H1 (cell line): ENCODE measurements at regions of chr4 and their contacts with region 1.

Region 1: DNA sequence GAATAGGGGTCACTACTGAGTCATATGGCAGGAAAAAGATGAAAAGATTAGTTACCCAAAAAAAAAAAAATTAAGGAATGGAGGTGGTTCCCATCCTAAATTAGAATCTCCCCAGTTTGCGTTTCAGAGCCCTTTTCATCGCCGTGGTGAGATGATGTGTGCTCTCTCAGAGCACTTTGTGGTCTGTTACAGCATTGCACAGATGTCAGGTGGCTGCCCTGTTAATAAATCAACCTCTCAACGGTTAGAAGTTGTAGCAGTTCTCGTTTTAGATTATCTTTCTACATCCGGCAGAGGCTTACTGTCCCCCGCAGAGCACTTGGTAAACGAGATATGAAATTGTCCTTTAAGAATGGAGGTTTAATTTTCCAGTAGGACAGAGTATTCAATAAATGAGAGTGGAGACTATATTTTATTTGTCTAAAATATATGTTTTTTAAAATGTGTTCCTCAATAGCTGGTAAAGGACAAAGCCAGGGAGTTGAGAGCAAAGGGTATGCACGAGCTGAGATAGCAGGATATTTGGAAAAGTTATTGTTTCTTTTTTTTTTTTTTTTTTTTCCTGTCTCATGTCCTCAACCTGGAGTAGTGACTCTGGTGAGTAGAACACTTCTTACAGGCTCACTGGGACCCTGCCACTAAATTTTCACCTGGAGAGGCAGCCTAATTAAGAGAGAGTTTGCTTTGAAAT is 26.9 kb downstream of the AFF1 start:
- DNase-seq: no peak
- H3K4me3 ChIP-seq: peak overlapping the region in 1 of 4 experiments; percentile 43; a peak in 1 of 8 replicates
- H3K27ac ChIP-seq: no peak overlapping the region
- H3K4me1 ChIP-seq: peaks cover 15 to 40% (median 30%) of the 10 kb centered on the region in 4 experiments; a peak in 6 of 7 replicates
- H3K27me3 ChIP-seq: no peaks in the 10 kb centered on the region
- CTCF ChIP-seq: no peak
- EP300 ChIP-seq: no peak
- POLR2A ChIP-seq: no peak
- RAD21 ChIP-seq: no peak

Region 2: DNA sequence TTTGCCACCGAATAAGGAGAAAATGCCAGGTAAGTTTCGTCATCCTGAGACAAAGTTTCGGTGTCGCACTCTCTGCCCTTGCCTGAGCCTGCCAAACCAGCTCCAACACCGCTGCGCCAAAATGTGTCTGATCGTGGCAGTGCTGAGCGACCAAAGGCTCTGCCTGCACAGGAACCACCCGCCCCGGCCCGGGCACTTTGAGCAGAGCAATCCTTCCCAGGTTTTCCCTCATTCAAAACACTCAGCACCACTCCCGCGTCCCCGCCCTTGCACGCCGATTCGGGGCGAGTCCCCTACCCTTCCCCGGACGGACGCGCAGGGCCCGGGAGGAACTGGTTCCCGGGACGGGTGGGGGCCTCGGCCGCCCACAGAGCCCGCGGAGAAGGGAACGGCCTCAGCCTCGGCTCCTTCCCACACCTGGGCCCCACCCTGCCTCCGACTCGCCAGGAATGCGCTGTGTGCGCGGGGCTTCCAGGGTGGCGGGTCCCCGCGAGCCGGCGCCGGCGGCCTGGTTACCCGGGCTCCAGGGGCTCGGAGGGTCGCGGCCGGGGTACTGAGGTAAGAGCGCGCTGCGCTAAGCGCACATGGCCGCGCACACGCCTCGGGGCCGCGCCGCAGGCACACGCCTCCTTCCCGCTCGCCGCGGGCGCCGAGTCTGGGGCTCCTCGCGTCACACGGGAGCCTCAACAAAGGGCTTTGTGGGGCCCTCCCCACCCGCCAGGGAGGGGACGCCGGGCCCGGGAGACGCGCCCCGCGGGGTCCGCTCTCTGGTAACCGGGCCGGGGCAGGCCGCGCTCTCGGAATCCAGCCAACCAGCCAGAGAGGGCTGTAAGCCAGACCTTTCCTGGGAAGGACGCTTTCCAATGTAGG is 69.7 kb before region 1 on chr4 and contains the start of gene C4orf36:
- CTCF ChIA-PET with region 1: no interaction called
- POLR2A ChIA-PET with region 1: no interaction called
- DNase-seq: peak; percentile 47 to 86
- H3K4me3 ChIP-seq: peak within 1 kb of the TSS; percentile 66 to 83 (median 70)
- H3K27ac ChIP-seq: peak within 1 kb of the TSS; percentile 78
- H3K4me1 ChIP-seq: peaks cover 0 to 3% (median under 1%) of the 10 kb centered on the region in 4 experiments; a peak in 1 of 7 replicates
- H3K27me3 ChIP-seq: peaks cover 0 to 6% (median 2%) of the 10 kb centered on the region in 4 experiments; a peak in 3 of 7 replicates
- CTCF ChIP-seq: peak in 1 of 3 experiments; percentile 20; a peak in 1 of 4 replicates
- EP300 ChIP-seq: no peak; a peak in 1 of 3 replicates
- POLR2A ChIP-seq: peak; percentile 48 to 63
- RAD21 ChIP-seq: peak; percentile 20 to 27; a peak in 3 of 4 replicates
- total RNA-seq, gene C4orf36: 1.5 TPM in 2 replicates

Region 3: GRCh38 chr4:86934771-86935565 is 26.8 kb before region 1 on chr4 and contains the start of gene AFF1:
- CTCF ChIA-PET with region 1: interaction called, 8 read pairs
- POLR2A ChIA-PET with region 1: interaction called, 319 read pairs
- DNase-seq: peak; percentile 81 to 90
- H3K4me3 ChIP-seq: peak within 1 kb of the TSS; percentile 67 to 88 (median 80)
- H3K27ac ChIP-seq: peak within 1 kb of the TSS; percentile 81
- H3K4me1 ChIP-seq: peaks cover 0 to 5% (median 3%) of the 10 kb centered on the region in 4 experiments; a peak in 3 of 7 replicates
- H3K27me3 ChIP-seq: no peaks in the 10 kb centered on the region
- CTCF ChIP-seq: peak; percentile 33 to 39 (median 34)
- EP300 ChIP-seq: no peak; a peak in 1 of 3 replicates
- POLR2A ChIP-seq: peak; percentile 85 to 92
- RAD21 ChIP-seq: peak; percentile 12 to 41; a peak in 3 of 4 replicates
- total RNA-seq, gene AFF1: 85.4 and 85.5 TPM in 2 replicates

Region 4: GRCh38 chr4:86950831-86951525 is 10.8 kb before region 1 on chr4:
- CTCF ChIA-PET with region 1: interaction called, 8 read pairs
- POLR2A ChIA-PET with region 1: interaction called, 319 read pairs
- DNase-seq: peak in 1 of 2 experiments; percentile 64
- H3K4me3 ChIP-seq: peak overlapping the region in 2 of 4 experiments; percentile 8 to 32; a peak in 2 of 8 replicates
- H3K27ac ChIP-seq: peak overlapping the region; percentile 21; the same call in 1 of the 2 replicates
- H3K4me1 ChIP-seq: peaks cover 2 to 44% (median 22%) of the 10 kb centered on the region in 4 experiments
- H3K27me3 ChIP-seq: no peaks in the 10 kb centered on the region
- CTCF ChIP-seq: no peak
- EP300 ChIP-seq: no peak
- POLR2A ChIP-seq: no peak
- RAD21 ChIP-seq: no peak

Region 5: GRCh38 chr4:86972997-86973396 is 11.2 kb after region 1 on chr4:
- CTCF ChIA-PET with region 1: interaction called, 7 read pairs
- POLR2A ChIA-PET with region 1: interaction called, 11 read pairs
- DNase-seq: no peak
- H3K4me3 ChIP-seq: no peak overlapping the region
- H3K27ac ChIP-seq: no peak overlapping the region
- H3K4me1 ChIP-seq: peaks cover 6 to 17% (median 12%) of the 10 kb centered on the region in 4 experiments
- H3K27me3 ChIP-seq: no peaks in the 10 kb centered on the region
- CTCF ChIP-seq: no peak
- EP300 ChIP-seq: no peak
- POLR2A ChIP-seq: no peak
- RAD21 ChIP-seq: no peak

Region 6: DNA sequence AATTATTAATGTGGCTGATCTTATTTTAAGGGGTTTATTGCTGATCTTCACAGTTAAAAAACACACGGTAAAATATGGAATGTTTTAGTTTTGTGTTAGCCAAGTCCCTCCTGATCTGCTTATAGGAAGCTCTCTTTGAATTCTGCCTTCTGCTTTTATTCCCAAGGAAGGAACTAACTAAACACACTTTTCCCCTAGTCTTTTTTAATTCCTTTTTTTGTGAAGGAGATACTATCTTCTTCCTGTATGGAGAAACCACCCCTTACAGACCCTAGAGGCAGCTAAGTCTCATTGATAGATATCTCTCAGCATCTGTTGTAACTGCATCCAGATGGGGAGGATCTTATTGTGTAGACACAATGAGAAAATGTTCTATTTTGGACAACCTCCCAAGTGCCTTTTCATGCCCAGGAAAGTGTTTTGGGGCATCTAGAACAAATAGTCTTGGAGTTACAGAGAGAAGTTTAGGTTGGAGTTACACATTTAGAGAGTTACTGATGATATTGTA is 37.4 kb after region 1 on chr4:
- CTCF ChIA-PET with region 1: interaction called, 7 read pairs
- POLR2A ChIA-PET with region 1: interaction called, 31 read pairs
- DNase-seq: no peak
- H3K4me3 ChIP-seq: no peak overlapping the region
- H3K27ac ChIP-seq: no peak overlapping the region
- H3K4me1 ChIP-seq: peaks cover 1 to 22% (median 7%) of the 10 kb centered on the region in 4 experiments; a peak in 4 of 7 replicates
- H3K27me3 ChIP-seq: no peaks in the 10 kb centered on the region
- CTCF ChIP-seq: no peak
- EP300 ChIP-seq: no peak
- POLR2A ChIP-seq: no peak
- RAD21 ChIP-seq: no peak

Region 7: GRCh38 chr4:87166296-87166854 is 204.6 kb after region 1 on chr4:
- CTCF ChIA-PET with region 1: no interaction called
- POLR2A ChIA-PET with region 1: no interaction called
- DNase-seq: no peak
- H3K4me3 ChIP-seq: no peak overlapping the region
- H3K27ac ChIP-seq: no peak overlapping the region
- H3K4me1 ChIP-seq: no peaks in the 10 kb centered on the region; a peak in 1 of 7 replicates
- H3K27me3 ChIP-seq: no peaks in the 10 kb centered on the region
- CTCF ChIP-seq: no peak
- EP300 ChIP-seq: no peak
- POLR2A ChIP-seq: no peak
- RAD21 ChIP-seq: no peak